Mammary epithelial cell (primary cell): ENCODE measurements at regions of chr1 and their contacts with region 1.

Region 1: GRCh38 chr1:62544570-62544969 is 52.8 kb upstream of the ANGPTL3 start:
- DNase-seq: no peak
- H3K4me3 ChIP-seq: no peak overlapping the region
- H3K27ac ChIP-seq: no peak overlapping the region
- H3K4me1 ChIP-seq: no peaks in the 10 kb centered on the region
- H3K27me3 ChIP-seq: no peaks in the 10 kb centered on the region
- CTCF ChIP-seq: no peak

Region 2: DNA sequence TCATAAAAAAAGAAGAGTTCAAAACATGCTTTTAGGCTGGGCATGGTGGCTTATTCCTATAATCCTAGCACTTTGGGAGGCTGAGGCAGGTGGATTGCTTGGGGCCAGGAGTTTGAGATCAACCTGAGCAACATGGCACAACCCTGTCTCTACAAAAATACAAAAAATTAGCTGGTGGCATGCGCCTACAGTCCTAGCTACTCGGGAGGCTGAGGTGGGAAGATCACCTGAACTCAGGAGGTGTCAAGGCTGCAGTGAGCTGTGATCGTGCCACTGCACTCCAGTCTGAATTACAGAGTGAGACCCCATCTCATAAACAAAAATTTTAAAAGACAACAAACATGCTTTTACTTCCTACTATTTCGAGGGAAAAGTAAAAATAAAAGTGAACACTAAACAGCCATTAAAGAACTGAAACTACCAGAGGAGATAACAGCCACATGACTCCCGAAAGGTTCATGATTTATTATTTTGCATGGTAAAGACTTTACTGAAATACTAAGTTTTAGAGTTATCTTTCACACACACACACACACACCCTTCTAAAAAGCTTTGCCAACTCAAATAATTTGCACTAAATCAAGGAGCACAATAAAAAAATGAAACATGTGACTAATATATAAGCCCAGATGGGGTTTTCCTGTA is 59.6 kb before region 1 on chr1:
- CTCF ChIA-PET with region 1: no interaction called
- dilution Hi-C with region 1: loop called (anchors 5 kb)
- in situ Hi-C with region 1: no loop called
- intact Hi-C with region 1: no loop called
- DNase-seq: no peak
- H3K4me3 ChIP-seq: no peak overlapping the region
- H3K27ac ChIP-seq: no peak overlapping the region
- H3K4me1 ChIP-seq: no peaks in the 10 kb centered on the region
- H3K27me3 ChIP-seq: no peaks in the 10 kb centered on the region
- CTCF ChIP-seq: no peak

Region 3: GRCh38 chr1:62625415-62625814 is 80.8 kb after region 1 on chr1:
- CTCF ChIA-PET with region 1: no interaction called
- dilution Hi-C with region 1: loop called (anchors 5 kb)
- in situ Hi-C with region 1: no loop called
- intact Hi-C with region 1: no loop called
- DNase-seq: no peak
- H3K4me3 ChIP-seq: no peak overlapping the region
- H3K27ac ChIP-seq: no peak overlapping the region
- H3K4me1 ChIP-seq: peaks cover 15% of the 10 kb centered on the region
- H3K27me3 ChIP-seq: no peaks in the 10 kb centered on the region
- CTCF ChIP-seq: no peak